ENCODE measurements at regions of chr5 and their contacts with region 1.

Region 1: GRCh38 chr5:80308526-80308925 is 11.3 kb upstream of the SPZ1 start:
- DNase-seq: peak in 1 of 2 experiments; percentile 18
- ATAC-seq: no peak
- H3K4me3 ChIP-seq: no peak overlapping the region
- H3K27ac ChIP-seq: no peak overlapping the region
- H3K4me1 ChIP-seq: no peaks in the 10 kb centered on the region
- CTCF ChIP-seq: no peak
- EP300 ChIP-seq: no peak
- POLR2A ChIP-seq: no peak
- RAD21 ChIP-seq: no peak

Region 2: DNA sequence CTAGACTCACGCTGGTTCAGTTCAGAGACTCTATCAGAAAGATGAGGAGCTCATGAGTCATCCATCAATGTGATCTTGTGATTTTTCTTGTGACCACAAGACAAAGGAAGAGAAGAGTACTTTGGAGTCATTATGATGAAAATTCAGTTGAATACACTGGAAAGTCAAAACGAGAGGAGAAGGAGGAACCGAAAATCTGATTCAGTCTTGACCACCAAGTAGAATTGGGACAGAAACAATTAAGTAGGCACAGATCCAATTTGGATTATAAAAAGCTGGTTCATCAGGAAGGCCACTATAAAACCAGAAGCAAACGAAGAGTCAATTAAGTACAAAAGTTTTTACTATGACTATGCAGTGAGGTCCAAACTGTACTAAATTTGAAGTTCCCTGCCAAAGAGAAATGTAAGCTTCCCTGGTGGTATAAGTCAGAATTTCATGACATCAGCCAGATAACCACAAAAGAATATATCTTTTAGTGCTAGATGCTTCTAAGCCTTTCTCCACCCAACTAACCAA is 182.5 kb before region 1 on chr5:
- CTCF ChIA-PET with region 1: interaction called, 10 read pairs
- POLR2A ChIA-PET with region 1: no interaction called
- DNase-seq: no peak
- ATAC-seq: 0 out of 6 replicates have a peak, but pooled peaks of 1 of the 2 experiments have one; percentile 50
- H3K4me3 ChIP-seq: no peak overlapping the region
- H3K27ac ChIP-seq: no peak overlapping the region
- H3K4me1 ChIP-seq: no peaks in the 10 kb centered on the region
- CTCF ChIP-seq: no peak
- EP300 ChIP-seq: no peak
- POLR2A ChIP-seq: no peak
- RAD21 ChIP-seq: no peak

Region 3: DNA sequence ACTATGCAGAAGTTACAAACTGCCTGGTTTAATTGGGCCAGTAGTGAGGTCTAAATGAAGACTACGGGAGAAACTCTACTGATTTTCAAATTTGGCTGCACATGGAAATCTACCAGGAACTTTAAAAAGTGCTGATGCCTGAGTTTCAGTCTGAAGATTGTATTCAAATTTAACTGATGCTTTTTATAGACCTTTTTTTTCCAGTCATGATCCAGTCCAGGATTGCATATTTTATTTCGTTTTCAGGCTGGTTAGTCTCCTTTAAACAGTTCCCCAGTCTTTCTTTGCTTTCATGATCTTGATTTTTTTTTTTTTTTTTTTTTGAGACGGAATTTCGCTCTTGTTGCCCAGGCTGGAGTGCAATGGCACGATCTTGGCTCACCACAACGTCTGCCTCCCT is 12.4 kb before region 1 on chr5:
- CTCF ChIA-PET with region 1: interaction called, 15 read pairs
- POLR2A ChIA-PET with region 1: no interaction called
- DNase-seq: no peak
- ATAC-seq: no peak
- H3K4me3 ChIP-seq: no peak overlapping the region
- H3K27ac ChIP-seq: no peak overlapping the region
- H3K4me1 ChIP-seq: no peaks in the 10 kb centered on the region
- CTCF ChIP-seq: no peak
- EP300 ChIP-seq: no peak
- POLR2A ChIP-seq: no peak
- RAD21 ChIP-seq: no peak